Activated T-helper 1 cell treated with anti-CD3 and anti-CD28 coated beads, Interleukin-12 subunit alpha, Interleukin-12 subunit beta, Interleukin-2, Interleukin-4 antibody, amounts not matched to agents 30 ng/mL and 10 ng/mL and 1 ng/mL, durations not matched to agents 14 hours and 24 hours and 36 hours (primary cell): ENCODE measurements at regions of chr20 and their contacts with region 1.

Region 1: GRCh38 chr20:8156235-8157079 is 24.4 kb downstream of the PLCB1 start:
- DNase-seq: no peak
- H3K4me3 Mint-ChIP-seq: no peak overlapping the region
- H3K27ac Mint-ChIP-seq: no peak overlapping the region
- H3K4me1 Mint-ChIP-seq: peaks cover 48% of the 10 kb centered on the region
- H3K27me3 Mint-ChIP-seq: no peaks in the 10 kb centered on the region

Region 2: GRCh38 chr20:8271727-8272126 is 115.3 kb after region 1 on chr20:
- intact Hi-C with region 1: loop called (anchors 10 kb)
- DNase-seq: no peak
- H3K4me3 Mint-ChIP-seq: no peak overlapping the region
- H3K27ac Mint-ChIP-seq: no peak overlapping the region
- H3K4me1 Mint-ChIP-seq: no peaks in the 10 kb centered on the region
- H3K27me3 Mint-ChIP-seq: peaks cover 11% of the 10 kb centered on the region

Region 3: DNA sequence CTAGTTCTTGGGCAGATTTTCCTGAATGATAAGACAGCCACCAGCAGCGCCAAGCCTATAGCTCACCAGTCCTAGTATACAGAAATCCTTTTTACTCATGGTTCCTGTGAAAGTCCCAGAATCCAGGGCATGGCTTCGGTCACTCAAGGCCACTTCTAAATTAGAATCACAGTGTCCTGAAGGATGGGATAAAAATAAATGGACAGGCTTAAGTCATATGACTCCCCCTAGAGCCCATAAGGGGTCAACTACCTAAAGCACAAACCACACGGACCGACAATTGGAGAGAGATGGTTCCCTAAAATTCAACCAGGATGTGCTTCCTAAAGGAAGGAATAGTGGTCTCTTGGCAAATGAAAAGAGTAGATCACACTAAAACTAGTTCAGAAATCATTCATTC is 508.3 kb after region 1 on chr20:
- intact Hi-C with region 1: loop called (anchors 5 kb)
- DNase-seq: no peak
- H3K4me3 Mint-ChIP-seq: no peak overlapping the region
- H3K27ac Mint-ChIP-seq: no peak overlapping the region
- H3K4me1 Mint-ChIP-seq: no peaks in the 10 kb centered on the region
- H3K27me3 Mint-ChIP-seq: no peaks in the 10 kb centered on the region